ENCODE measurements at regions of chr17 and their contacts with region 1.

Region 1: DNA sequence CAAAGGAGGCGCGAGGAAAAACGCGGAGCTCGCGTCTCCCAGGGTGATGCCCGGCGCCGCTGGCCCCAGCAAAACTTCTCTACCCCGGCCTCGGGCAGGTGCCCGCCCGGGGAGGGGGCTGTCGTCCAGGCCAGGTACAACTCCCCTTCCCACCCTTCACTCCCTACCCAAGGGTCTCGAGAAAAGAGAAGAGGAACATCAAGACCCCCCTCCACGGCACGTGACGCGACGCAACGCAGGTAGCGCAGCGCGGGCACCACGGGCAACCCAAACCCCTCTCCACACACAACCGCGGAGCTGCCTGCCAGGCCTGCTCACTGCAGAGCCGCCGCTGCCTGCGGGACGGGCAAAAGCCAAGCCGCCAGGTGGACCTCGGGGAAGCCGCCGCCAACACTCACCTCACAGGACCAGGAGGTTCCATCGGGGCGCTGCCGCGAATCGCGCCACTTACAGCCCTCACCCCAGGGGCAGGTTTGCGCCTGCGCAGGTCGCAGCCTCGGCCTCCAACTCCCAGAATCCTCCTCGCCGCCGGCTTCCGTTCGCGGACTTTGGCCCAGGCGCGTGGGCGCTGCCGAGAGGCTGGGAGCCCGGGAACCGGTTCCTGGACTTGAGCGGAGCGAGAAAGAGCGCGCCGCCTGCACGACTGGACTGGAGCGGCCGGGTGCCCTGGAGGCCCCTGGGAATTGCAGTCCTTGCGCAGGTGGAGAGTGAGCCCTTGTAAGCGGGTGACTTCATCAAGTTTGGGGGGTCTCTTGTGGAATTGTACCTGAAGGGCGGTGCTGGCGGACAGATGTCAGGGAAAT is at the start of gene ZNF232:
- DNase-seq: peak; percentile 97
- ATAC-seq: peak; percentile 93
- H3K4me3 Mint-ChIP-seq: peak within 1 kb of the TSS; percentile 83
- H3K27ac Mint-ChIP-seq: peak within 1 kb of the TSS; percentile 73
- H3K4me1 Mint-ChIP-seq: peaks cover 27% of the 10 kb centered on the region
- H3K27me3 Mint-ChIP-seq: peaks cover 10% of the 10 kb centered on the region
- total RNA-seq, gene ZNF232: 16.1 to 16.2 TPM

Region 2: DNA sequence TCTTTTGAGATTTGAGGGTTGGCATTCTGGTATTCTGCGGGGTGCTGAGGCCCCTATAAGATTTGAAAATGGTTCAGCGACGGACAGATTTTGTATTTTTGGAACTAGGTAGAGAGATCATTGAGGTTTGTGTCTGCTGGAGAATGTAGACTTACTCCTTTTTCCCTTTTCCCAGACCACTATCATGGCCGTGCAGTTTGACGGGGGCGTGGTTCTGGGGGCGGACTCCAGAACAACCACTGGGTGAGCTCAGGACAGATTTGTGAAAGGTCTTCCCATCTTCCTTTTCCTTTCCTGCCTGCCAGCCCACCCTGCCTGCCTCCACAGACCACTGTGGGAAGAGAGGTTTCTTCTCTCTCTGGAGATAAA is 315.1 kb before region 1 on chr17:
- CTCF ChIA-PET with region 1: no interaction called
- POLR2A ChIA-PET with region 1: no interaction called
- intact Hi-C with region 1: loop called in 1 of 2 experiments (anchors 1 kb)
- DNase-seq: peak; percentile 58
- ATAC-seq: no peak
- H3K4me3 Mint-ChIP-seq: peak overlapping the region; percentile 94
- H3K27ac Mint-ChIP-seq: peak overlapping the region; percentile 97
- H3K4me1 Mint-ChIP-seq: peaks cover 24% of the 10 kb centered on the region
- H3K27me3 Mint-ChIP-seq: peaks cover 3% of the 10 kb centered on the region

Region 3: DNA sequence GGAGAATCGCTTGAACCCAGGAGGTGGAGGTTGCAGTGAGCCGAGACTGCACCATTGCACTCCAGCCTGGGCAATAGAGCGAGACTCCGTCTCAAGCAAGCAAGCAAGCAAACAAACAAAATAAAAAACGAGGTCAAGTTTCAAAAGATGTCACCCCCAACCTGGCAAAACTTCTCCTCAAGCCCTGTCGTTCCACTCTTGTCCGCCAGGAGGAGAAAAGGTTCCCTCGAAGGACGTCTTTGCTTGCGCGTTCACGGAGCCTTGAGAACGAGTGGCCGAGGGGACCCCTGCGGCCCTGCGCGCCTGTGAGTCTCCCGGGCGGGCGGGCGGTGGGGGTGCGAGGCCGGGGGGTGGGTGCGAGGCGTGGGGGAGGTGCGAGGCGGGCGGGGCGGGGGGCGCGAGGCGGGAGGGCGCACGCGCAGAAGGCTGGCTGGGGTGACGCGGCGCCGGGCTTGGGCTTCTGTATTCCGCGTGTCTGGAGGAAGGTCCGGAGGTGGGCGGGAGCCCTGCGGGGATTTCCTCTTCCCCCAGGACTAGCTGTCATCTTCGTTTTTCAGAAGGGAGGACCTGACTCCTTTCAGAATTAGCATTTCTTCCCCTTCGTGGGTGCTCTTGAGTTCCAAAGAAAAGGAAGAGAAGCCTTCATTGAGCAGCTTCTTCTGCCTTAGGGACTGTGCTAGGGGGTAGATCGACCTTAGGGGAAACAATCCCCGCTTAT is 80.1 kb before region 1 on chr17:
- CTCF ChIA-PET with region 1: no interaction called
- POLR2A ChIA-PET with region 1: no interaction called
- intact Hi-C with region 1: loop called in 1 of 2 experiments (anchors 1 kb)
- DNase-seq: peak; percentile 91
- ATAC-seq: peak; percentile 82
- H3K4me3 Mint-ChIP-seq: peak overlapping the region; percentile 68
- H3K27ac Mint-ChIP-seq: peak overlapping the region; percentile 85
- H3K4me1 Mint-ChIP-seq: peaks cover 19% of the 10 kb centered on the region
- H3K27me3 Mint-ChIP-seq: peaks cover 3% of the 10 kb centered on the region

Region 4: DNA sequence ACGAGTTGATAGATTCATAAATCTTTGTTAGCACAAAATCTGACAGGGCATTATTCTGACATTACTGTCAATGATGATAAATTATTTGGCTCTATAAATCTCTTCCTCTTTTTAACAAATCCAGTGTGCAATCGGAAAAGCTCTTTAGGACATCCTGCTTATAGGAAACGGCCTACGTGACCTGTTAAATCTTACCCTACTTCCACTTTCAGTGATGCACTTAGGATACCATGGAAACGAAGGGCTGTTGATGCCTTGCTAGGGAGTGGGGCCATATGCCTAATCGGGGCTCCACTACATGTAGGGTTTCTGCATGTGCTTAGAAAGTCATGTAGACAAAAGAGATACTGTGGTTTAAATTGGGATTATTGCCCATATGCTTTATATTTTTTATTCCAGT is 52.8 kb after region 1 on chr17:
- CTCF ChIA-PET with region 1: no interaction called
- POLR2A ChIA-PET with region 1: no interaction called
- intact Hi-C with region 1: no loop called
- DNase-seq: no peak
- ATAC-seq: no peak
- H3K4me3 Mint-ChIP-seq: no peak overlapping the region
- H3K27ac Mint-ChIP-seq: no peak overlapping the region
- H3K4me1 Mint-ChIP-seq: no peaks in the 10 kb centered on the region
- H3K27me3 Mint-ChIP-seq: peaks cover 6% of the 10 kb centered on the region

Region 5: GRCh38 chr17:5191541-5192417 is 80.2 kb after region 1 on chr17 and contains the start of gene ZNF594:
- CTCF ChIA-PET with region 1: interaction called, 3 read pairs
- POLR2A ChIA-PET with region 1: no interaction called
- intact Hi-C with region 1: loop called in 1 of 2 experiments (anchors 1 kb)
- DNase-seq: peak; percentile 99
- ATAC-seq: peak; percentile 100
- H3K4me3 Mint-ChIP-seq: peak within 1 kb of the TSS; percentile 94
- H3K27ac Mint-ChIP-seq: peak within 1 kb of the TSS; percentile 88
- H3K4me1 Mint-ChIP-seq: peaks cover 27% of the 10 kb centered on the region
- H3K27me3 Mint-ChIP-seq: no peaks in the 10 kb centered on the region
- total RNA-seq, gene ZNF594: 8.0 to 8.4 TPM

Region 6: DNA sequence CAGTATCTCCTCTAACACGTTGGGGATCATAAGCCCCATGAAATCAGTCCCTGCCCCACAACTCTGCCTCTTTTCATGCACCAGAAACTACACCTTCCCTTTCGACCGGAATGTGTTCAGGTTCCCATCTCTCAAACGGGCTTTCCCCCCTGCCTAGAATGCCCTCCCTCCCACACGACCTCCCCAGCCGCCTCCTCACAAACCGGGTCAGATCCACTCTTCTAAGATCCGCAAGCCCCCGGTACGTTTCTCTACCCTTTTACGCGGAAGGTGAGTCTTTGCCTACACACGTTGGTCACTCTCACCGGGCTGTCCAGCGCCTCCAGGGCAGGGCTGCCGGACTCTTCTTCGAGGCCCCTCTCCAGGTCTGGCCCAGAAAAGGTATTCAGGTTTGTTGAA is 356.5 kb after region 1 on chr17:
- CTCF ChIA-PET with region 1: no interaction called
- POLR2A ChIA-PET with region 1: no interaction called
- intact Hi-C with region 1: loop called in 1 of 2 experiments (anchors 5 kb)
- DNase-seq: peak; percentile 35
- ATAC-seq: peak; percentile 14
- H3K4me3 Mint-ChIP-seq: peak overlapping the region; percentile 90
- H3K27ac Mint-ChIP-seq: peak overlapping the region; percentile 75
- H3K4me1 Mint-ChIP-seq: peaks cover 38% of the 10 kb centered on the region
- H3K27me3 Mint-ChIP-seq: no peaks in the 10 kb centered on the region

Measured in activated CD4-positive, alpha-beta T cell treated with anti-CD3 and anti-CD28 coated beads for 36 hours (primary cell).